ENCODE measurements at regions of chr18 and their contacts with region 1.

Region 1: DNA sequence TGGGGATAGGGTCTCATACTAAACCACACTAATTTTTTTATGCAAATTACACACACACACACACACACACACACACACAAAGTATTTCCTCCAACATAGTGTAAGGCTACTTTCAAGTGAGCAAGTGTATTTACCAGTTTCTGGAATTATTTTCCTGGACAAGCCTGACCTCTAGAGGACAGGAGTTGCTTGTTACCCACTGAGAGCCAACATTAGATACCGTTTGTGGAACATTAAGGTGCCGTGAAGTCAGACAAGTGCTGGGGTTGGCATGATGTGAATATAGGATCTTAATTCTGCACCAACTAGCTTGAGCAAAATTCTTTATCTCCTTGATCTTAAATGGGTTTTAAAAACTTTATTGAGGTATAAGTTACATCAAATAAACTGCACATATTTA is 39.3 kb upstream of the SERPINB2 start:
- DNase-seq: peak; percentile 48
- H3K4me3 Mint-ChIP-seq: no peak overlapping the region
- H3K27ac Mint-ChIP-seq: no peak overlapping the region
- H3K4me1 Mint-ChIP-seq: peaks cover 9% of the 10 kb centered on the region
- H3K27me3 Mint-ChIP-seq: no peaks in the 10 kb centered on the region
- CTCF ChIP-seq: peak; percentile 58

Region 2: GRCh38 chr18:63518178-63519012 is 329.8 kb before region 1 on chr18:
- CTCF ChIA-PET with region 1: interaction called, 3 read pairs
- intact Hi-C with region 1: loop called (anchors 1 kb)
- DNase-seq: peak; percentile 69
- H3K4me3 Mint-ChIP-seq: no peak overlapping the region
- H3K27ac Mint-ChIP-seq: no peak overlapping the region
- H3K4me1 Mint-ChIP-seq: peaks cover 15% of the 10 kb centered on the region
- H3K27me3 Mint-ChIP-seq: no peaks in the 10 kb centered on the region
- CTCF ChIP-seq: peak; percentile 57

Region 3: DNA sequence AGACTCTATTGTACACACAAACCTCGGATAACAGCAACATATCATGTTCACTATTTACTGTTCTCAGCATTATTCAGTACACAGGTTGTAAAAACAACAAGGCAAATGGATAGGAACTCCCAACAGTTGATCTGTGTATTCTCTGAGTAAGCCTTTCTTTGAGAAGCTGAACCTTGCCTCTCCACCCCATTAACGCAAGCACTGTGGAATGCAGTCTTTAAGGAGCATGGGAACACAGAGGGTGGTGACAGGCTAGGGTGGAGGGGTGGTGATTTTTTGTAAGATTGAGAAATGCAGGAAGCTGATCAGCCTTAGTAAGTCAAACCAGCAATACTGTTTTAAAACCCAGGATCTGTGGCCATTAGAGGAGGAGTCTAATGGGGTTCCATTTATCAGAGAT is 165.0 kb before region 1 on chr18:
- CTCF ChIA-PET with region 1: no interaction called
- intact Hi-C with region 1: loop called (anchors 5 kb)
- DNase-seq: peak; percentile 77
- H3K4me3 Mint-ChIP-seq: peak overlapping the region; percentile 22
- H3K27ac Mint-ChIP-seq: peak overlapping the region; percentile 91
- H3K4me1 Mint-ChIP-seq: peaks cover 43% of the 10 kb centered on the region
- H3K27me3 Mint-ChIP-seq: no peaks in the 10 kb centered on the region
- CTCF ChIP-seq: no peak

Region 4: DNA sequence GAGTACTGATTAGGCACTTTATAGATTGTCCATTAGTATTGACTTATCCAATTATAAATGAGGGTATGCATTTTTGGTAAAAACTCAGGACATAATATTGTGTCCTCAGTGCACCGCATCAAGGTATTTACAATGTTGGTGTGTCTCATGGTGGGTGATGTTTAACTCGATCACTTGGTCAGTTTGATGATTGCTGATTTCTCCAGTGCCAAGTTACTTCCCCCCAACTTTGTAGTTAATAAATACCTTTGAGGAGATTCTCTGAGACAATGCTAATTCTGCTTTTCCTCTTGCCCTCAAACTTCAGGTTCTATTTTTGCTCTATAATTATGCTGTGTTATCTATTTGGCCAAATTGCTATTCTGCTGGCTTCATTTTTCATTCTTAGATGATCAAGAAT is 101.2 kb before region 1 on chr18:
- CTCF ChIA-PET with region 1: interaction called, 19 read pairs
- intact Hi-C with region 1: loop called (anchors 5 kb)
- DNase-seq: no peak
- H3K4me3 Mint-ChIP-seq: no peak overlapping the region
- H3K27ac Mint-ChIP-seq: no peak overlapping the region
- H3K4me1 Mint-ChIP-seq: no peaks in the 10 kb centered on the region
- H3K27me3 Mint-ChIP-seq: no peaks in the 10 kb centered on the region
- CTCF ChIP-seq: no peak

Region 5: GRCh38 chr18:63936156-63936931 is 88.2 kb after region 1 on chr18:
- CTCF ChIA-PET with region 1: interaction called, 3 read pairs
- intact Hi-C with region 1: loop called (anchors 1 kb)
- DNase-seq: peak; percentile 89
- H3K4me3 Mint-ChIP-seq: no peak overlapping the region
- H3K27ac Mint-ChIP-seq: no peak overlapping the region
- H3K4me1 Mint-ChIP-seq: no peaks in the 10 kb centered on the region
- H3K27me3 Mint-ChIP-seq: no peaks in the 10 kb centered on the region
- CTCF ChIP-seq: peak; percentile 88